Adrenal gland (tissue), 19 donors: ENCODE measurements at regions of chr1 and their contacts with region 1.

Region 1: GRCh38 chr1:103106426-103107341 is 1.6 kb downstream of the COL11A1 start:
- DNase-seq: peak; percentile 24 to 61 (median 35)
- H3K4me3 ChIP-seq: peak overlapping the region in 3 of 4 donors; percentile 21 to 55 (median 25)
- H3K27ac ChIP-seq: peak overlapping the region in 1 of 5 donors; percentile 18
- H3K4me1 ChIP-seq: peaks cover 0 to 21% of the 10 kb centered on the region in 2 donors
- H3K27me3 ChIP-seq: no peaks in the 10 kb centered on the region
- CTCF ChIP-seq: peak; percentile 26 to 64 (median 55)
- POLR2A ChIP-seq: no peak

Region 2: GRCh38 chr1:103461161-103462105 is 354.7 kb after region 1 on chr1:
- intact Hi-C with region 1: loop called (anchors 10 kb)
- DNase-seq: no peak
- H3K4me3 ChIP-seq: no peak overlapping the region
- H3K27ac ChIP-seq: no peak overlapping the region
- H3K4me1 ChIP-seq: no peaks in the 10 kb centered on the region
- H3K27me3 ChIP-seq: no peaks in the 10 kb centered on the region
- CTCF ChIP-seq: peak; percentile 16 to 56 (median 42)
- POLR2A ChIP-seq: no peak

Region 3: GRCh38 chr1:103513711-103514110 is 407.0 kb after region 1 on chr1:
- intact Hi-C with region 1: loop called in 1 of 2 experiments (anchors 2 kb)
- DNase-seq: peak in 1 of 7 donors; percentile 9
- H3K4me3 ChIP-seq: no peak overlapping the region
- H3K27ac ChIP-seq: no peak overlapping the region
- H3K4me1 ChIP-seq: no peaks in the 10 kb centered on the region
- H3K27me3 ChIP-seq: no peaks in the 10 kb centered on the region
- CTCF ChIP-seq: no peak
- POLR2A ChIP-seq: no peak